ENCODE measurements at regions of chr19 and their contacts with region 1.

Region 1: GRCh38 chr19:10717356-10718204 is at the start of gene DNM2:
- DNase-seq: peak; percentile 98
- H3K4me3 Mint-ChIP-seq: peak within 1 kb of the TSS; percentile 99
- H3K27ac Mint-ChIP-seq: peak within 1 kb of the TSS; percentile 86
- H3K4me1 Mint-ChIP-seq: peaks cover 34% of the 10 kb centered on the region
- H3K27me3 Mint-ChIP-seq: no peaks in the 10 kb centered on the region
- total RNA-seq, gene DNM2: 277 to 288 TPM

Region 2: DNA sequence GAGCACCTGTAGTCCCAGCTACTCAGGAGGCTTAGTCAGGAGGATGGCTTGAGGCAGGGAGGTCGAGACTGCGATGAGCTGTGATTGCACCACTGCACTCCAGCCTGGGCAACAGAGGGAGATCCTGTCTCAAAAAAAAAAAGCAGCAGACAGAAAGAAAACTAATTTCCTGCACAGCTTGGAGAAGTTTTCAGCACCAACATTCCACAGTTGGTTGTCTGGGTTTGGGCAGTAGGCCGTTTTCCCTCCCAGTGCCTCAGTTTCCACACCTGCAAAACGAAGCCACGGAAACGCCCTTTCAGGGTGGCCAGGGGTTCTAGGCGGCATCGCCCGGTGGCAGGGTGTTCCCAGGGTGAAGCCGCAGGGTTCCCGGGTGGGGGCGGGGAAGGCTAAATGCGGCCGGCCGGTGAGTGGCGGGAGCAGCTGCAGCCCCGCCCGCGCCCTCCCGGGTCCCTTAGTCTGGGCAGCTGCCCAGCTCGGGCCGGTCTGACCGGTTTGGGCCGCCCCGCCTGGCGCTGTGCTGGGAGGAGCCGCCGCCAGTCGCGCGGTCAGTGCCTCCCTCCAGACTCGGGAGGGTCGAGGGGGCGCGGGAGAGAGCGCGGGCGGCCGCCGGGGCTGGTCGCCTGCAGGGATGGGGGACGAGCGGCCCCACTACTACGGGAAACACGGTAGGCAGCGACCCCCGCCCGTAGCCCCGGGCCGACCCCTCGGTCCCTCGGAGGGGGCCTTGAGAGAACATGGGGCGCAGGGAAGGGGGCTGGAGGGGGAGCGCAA is 92.4 kb before region 1 on chr19 and contains the start of gene SLC44A2:
- CTCF ChIA-PET with region 1: no interaction called
- POLR2A ChIA-PET with region 1: no interaction called
- DNase-seq: no peak
- H3K4me3 Mint-ChIP-seq: no peak within 1 kb of the TSS
- H3K27ac Mint-ChIP-seq: peak within 1 kb of the TSS; percentile 84
- H3K4me1 Mint-ChIP-seq: peaks cover 44% of the 10 kb centered on the region
- H3K27me3 Mint-ChIP-seq: no peaks in the 10 kb centered on the region
- total RNA-seq, gene SLC44A2: 147 to 152 TPM

Region 3: GRCh38 chr19:10662384-10663251 is 55.0 kb before region 1 on chr19:
- CTCF ChIA-PET with region 1: no interaction called
- POLR2A ChIA-PET with region 1: no interaction called
- DNase-seq: no peak
- H3K4me3 Mint-ChIP-seq: no peak overlapping the region
- H3K27ac Mint-ChIP-seq: peak overlapping the region; percentile 48
- H3K4me1 Mint-ChIP-seq: peaks cover 54% of the 10 kb centered on the region
- H3K27me3 Mint-ChIP-seq: no peaks in the 10 kb centered on the region

Region 4: GRCh38 chr19:10701955-10702525 is 15.5 kb before region 1 on chr19:
- CTCF ChIA-PET with region 1: interaction called, 32 read pairs
- POLR2A ChIA-PET with region 1: interaction called, 28 read pairs
- DNase-seq: peak; percentile 22
- H3K4me3 Mint-ChIP-seq: peak overlapping the region; percentile 81
- H3K27ac Mint-ChIP-seq: peak overlapping the region; percentile 12
- H3K4me1 Mint-ChIP-seq: peaks cover 13% of the 10 kb centered on the region
- H3K27me3 Mint-ChIP-seq: peaks cover 8% of the 10 kb centered on the region

Region 5: DNA sequence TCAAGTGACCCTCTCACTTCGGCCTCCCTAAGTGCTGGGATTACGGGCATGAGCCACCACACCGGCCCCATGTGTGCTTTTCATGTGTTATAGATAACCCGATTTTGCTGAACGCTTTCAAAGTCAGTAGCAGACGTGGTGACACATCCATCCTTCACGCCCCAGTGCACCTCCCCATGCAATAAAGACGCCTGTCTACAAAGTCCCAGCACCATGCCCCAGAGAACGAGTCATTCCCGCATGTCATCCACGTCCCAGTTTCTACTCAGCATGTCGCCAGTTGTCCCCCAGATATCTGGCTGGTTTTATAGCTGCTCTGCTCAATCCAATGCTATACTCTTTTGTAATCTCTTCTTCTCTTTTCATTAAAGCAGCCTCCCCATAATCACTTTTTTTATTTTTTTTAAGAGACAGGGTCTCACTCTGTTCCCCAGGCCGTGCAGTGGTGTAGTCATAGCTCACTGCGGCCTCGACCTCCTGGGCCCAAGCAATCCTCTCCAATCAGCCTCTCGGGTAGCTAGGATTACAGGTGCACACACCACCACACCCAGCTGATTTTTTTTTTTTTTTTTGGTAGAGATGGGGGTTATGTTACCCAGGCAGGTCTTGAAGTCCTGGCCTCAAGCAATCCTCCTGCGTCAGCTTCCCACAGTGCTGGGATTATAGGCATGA is 42.8 kb after region 1 on chr19:
- CTCF ChIA-PET with region 1: interaction called, 48 read pairs
- POLR2A ChIA-PET with region 1: interaction called, 32 read pairs
- DNase-seq: peak; percentile 43
- H3K4me3 Mint-ChIP-seq: peak overlapping the region; percentile 69
- H3K27ac Mint-ChIP-seq: peak overlapping the region; percentile 90
- H3K4me1 Mint-ChIP-seq: peaks cover 86% of the 10 kb centered on the region
- H3K27me3 Mint-ChIP-seq: no peaks in the 10 kb centered on the region

Region 6: DNA sequence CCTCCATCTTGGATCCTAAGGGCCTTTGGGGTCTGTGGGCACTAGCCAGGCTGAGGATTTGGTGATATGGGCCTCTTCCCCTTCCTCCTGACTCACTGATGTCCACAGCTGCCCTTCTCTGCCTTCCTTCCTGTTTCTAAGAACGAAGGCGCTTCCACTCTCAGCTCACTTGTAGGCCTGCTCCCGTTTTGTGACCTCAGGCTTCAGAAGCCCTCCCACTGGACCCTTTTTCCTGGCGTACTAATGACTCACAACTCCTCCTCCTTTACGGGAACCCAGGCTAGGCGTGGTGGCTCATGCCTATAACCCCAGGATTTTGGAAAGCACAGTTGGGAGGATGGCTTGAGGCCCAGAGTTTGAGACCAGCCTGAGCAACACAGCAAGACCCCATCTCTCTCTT is 62.8 kb after region 1 on chr19:
- CTCF ChIA-PET with region 1: interaction called, 19 read pairs
- POLR2A ChIA-PET with region 1: interaction called, 3 read pairs
- DNase-seq: no peak
- H3K4me3 Mint-ChIP-seq: no peak overlapping the region
- H3K27ac Mint-ChIP-seq: peak overlapping the region; percentile 66
- H3K4me1 Mint-ChIP-seq: peaks cover 38% of the 10 kb centered on the region
- H3K27me3 Mint-ChIP-seq: no peaks in the 10 kb centered on the region

Region 7: DNA sequence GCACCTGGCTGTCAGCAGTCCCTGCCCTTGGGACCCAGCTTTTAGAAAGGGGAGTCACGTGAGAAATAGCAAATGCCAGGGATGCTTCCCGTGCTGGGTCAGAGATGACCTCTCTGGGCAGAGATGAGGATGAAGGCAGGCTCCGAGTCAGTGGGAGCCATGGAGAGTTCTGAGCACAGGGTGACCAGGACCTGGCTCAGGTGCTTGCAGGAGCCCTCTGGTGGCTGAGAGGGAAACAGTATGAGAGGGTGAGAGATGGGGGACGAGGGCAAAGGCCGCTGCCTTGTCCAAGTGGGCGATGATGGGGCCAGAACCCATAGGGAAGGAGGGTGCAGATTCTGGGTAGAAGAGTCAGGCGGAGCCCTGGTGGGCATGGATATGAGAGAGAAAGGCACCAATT is 102.6 kb after region 1 on chr19:
- CTCF ChIA-PET with region 1: interaction called, 23 read pairs
- POLR2A ChIA-PET with region 1: interaction called, 14 read pairs
- DNase-seq: no peak
- H3K4me3 Mint-ChIP-seq: no peak overlapping the region
- H3K27ac Mint-ChIP-seq: no peak overlapping the region
- H3K4me1 Mint-ChIP-seq: peaks cover 16% of the 10 kb centered on the region
- H3K27me3 Mint-ChIP-seq: no peaks in the 10 kb centered on the region

Region 8: DNA sequence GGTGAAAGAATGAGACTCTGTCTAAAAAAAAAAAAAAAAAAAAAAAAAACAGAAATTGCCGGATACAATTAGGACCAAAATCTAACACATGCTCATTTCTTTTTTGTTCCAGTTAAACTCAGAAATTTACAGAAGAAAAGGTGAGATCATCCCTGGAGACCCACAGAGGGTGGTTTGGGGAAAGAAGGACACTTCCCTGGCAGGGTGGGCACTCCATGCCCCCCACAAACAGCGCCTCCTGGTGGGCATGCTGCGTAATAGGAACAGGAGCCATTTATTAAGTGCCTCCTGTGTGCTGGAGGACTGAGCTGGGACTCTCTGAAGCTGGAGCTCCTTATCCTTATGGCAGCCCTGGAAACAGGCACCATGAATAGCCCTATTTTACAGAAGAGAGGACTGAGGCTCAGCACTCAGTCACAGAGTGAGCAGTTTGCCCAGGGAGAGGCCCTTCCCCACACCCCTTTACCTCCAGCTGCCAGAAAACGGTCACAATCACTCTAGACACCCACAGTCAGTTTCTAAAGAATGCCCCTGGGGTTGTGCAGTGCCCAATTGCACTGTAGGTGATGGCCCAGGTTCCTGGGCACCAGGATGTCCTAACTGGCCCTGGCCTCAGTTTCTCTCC is 140.7 kb after region 1 on chr19:
- CTCF ChIA-PET with region 1: interaction called, 138 read pairs
- POLR2A ChIA-PET with region 1: interaction called, 12 read pairs
- DNase-seq: peak; percentile 37
- H3K4me3 Mint-ChIP-seq: no peak overlapping the region
- H3K27ac Mint-ChIP-seq: no peak overlapping the region
- H3K4me1 Mint-ChIP-seq: peaks cover 7% of the 10 kb centered on the region
- H3K27me3 Mint-ChIP-seq: no peaks in the 10 kb centered on the region

Measured in activated CD4-positive, alpha-beta memory T cell treated with anti-CD3 and anti-CD28 coated beads, Interleukin-2, amount 10 ng/mL, durations not matched to agents 7 days and 5 days (primary cell).